ENCODE measurements at regions of chr12 and their contacts with region 1.

Region 1: DNA sequence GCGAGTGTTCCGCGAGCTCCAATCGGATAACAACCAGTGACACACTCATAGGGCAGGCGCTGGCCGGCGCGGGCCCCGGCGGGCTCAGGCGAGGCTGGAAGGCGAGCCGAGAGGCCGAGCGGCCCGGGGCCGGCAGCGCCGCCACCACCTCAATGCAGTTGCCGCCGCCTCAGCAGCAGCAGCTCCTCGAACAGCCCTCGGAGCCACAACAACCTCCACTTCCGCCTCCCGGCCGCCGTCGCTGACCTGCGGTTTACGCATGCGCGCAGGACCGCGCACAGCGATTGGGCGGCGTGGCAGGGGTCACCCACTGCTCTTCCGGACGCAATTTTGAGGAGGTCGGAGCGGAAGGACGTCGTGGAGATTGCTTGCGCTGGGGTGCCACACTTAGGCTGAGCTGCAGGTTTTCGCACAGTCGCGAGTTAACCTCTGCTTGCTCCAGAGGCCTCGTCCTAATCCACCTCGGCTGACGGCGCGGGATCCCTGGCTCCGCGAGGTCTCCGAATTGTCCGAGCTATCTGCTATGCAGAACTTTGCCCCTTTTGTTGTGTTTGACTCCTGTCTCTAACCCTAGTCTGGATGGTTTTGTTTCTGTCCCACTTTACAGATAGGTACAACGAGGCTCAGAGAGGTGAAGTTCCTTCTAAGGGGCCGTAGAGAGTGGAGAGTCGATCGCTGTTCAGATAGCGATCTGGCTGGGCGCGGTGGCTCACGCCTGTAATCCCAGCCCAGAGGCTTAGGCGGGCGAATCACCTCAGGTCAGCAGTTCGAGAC is at the starts of genes ACAD10 and BRAP:
- DNase-seq: peak; percentile 62
- ATAC-seq: peak; percentile 97
- H3K4me3 ChIP-seq: peak within 1 kb of the TSS; percentile 80 to 95
- H3K27ac ChIP-seq: peak within 1 kb of the TSS; percentile 97
- H3K4me1 ChIP-seq: peaks cover 18% of the 10 kb centered on the region; the same call in 1 of the 2 replicates
- H3K27me3 ChIP-seq: no peaks in the 10 kb centered on the region
- CTCF ChIP-seq: no peak
- total RNA-seq, gene ACAD10: 30.8 TPM
- total RNA-seq, gene BRAP: 19.6 TPM

Region 2: DNA sequence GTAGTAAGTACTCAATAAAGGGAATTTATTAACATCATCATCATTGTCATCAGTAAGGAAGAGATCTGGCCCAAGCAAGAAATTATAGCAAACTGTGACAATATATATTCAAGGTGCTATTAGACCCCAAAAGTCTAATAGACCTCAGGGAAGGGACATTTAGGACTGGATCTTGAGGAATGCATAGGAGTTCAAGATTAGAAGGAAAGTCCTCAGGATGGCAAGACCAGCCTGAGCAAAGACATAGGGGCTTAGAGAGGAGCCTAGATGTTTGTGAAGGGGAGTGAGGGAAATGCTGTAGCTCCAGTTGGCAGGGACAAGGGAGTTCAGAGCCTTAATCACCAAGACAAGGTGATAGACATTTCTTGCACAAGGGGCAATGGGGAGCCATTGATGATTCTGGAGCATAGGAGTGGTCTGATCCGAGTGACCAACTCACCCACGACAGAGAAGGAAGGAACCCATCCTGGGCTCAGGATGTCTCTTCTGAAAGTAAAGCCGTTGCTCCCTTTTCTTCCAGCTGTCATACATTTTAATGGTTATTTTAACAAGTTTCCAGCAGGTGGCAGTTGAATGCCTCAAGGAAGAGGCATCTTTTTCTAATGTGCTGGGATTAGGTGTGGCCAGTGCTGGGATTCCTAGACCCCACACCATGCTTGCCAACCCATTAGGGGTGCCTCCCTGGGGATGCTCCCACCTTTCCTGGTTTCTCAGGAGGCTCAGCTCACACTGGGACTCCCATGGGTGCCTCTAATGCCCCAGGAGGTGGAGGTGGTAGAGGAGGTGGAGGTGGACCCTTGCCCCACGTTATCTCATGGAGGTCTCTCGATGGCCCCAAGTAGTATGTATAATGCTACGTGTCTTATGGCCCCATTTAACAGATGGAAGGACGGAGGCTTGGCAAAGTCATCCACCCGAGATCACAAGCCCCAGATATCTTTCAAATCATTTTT is 354.9 kb before region 1 on chr12:
- CTCF ChIA-PET with region 1: no interaction called
- POLR2A ChIA-PET with region 1: interaction called, 14 read pairs
- in situ Hi-C with region 1: no loop called
- intact Hi-C with region 1: no loop called
- DNase-seq: peak; percentile 22
- ATAC-seq: peak; percentile 86
- H3K4me3 ChIP-seq: no peak overlapping the region
- H3K27ac ChIP-seq: no peak overlapping the region
- H3K4me1 ChIP-seq: no peaks in the 10 kb centered on the region
- H3K27me3 ChIP-seq: no peaks in the 10 kb centered on the region
- CTCF ChIP-seq: peak; percentile 84

Region 3: DNA sequence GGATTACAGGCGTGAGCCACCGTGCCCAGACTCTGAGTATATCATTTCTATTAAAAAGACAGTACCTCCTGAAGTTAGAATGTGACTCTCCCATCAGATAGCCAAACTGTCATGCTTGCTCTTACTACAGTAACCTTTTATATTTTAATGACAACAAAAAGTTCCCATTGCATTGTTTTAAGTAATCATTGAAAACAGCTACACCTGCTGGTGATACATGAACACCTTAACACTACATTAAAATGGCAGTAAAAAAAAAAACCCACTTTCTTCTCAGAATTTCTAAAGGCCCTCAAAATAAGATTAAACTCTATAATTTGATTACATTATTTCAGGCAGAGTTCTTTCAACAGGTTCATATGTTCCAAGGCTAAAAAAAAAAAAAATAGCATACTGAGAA is 203.5 kb before region 1 on chr12:
- CTCF ChIA-PET with region 1: no interaction called
- POLR2A ChIA-PET with region 1: interaction called, 11 read pairs
- in situ Hi-C with region 1: no loop called
- intact Hi-C with region 1: no loop called
- DNase-seq: no peak
- ATAC-seq: no peak
- H3K4me3 ChIP-seq: no peak overlapping the region
- H3K27ac ChIP-seq: no peak overlapping the region
- H3K4me1 ChIP-seq: no peaks in the 10 kb centered on the region
- H3K27me3 ChIP-seq: no peaks in the 10 kb centered on the region
- CTCF ChIP-seq: no peak

Region 4: DNA sequence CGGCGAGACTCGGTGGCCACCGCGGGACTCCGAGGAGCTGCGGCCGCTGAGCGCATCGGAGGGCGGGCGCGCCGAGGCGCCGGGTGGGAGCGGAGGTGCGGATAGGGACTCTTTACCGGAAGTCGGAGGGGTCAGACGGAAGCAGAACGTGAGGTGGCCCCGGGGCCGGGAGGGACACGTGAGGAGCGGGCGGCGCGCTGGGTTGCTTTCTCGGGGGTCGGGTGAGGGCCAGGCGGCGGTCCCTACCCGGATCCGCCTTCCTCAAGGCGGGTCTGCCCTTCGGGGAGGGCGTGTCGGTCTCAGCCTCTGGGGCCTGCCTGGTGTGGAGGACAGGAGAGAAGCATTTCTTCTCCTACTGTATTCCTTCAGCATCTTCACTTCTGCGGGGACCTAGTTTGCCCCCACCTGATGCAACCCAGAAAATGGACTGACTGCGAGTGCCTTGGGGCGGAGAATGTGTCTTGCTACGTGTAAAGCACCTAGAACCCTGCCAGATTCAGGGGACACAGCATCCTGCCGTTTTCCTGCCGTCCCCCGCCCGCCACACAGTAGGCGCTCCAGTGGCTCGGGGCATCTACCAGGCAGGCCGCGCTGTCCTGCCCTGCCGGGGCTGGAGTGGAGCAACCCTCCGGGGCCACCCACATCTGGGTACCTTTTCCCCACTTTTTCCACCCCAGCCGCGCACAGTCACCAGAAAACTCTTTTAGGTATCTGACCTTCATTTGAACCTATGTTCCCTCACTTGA is 86.3 kb before region 1 on chr12:
- CTCF ChIA-PET with region 1: no interaction called
- POLR2A ChIA-PET with region 1: no interaction called
- in situ Hi-C with region 1: loop called (anchors 25 kb)
- intact Hi-C with region 1: no loop called
- DNase-seq: peak; percentile 36
- ATAC-seq: peak; percentile 88
- H3K4me3 ChIP-seq: peak overlapping the region; percentile 78 to 91
- H3K27ac ChIP-seq: peak overlapping the region; percentile 98
- H3K4me1 ChIP-seq: peaks cover 13% of the 10 kb centered on the region
- H3K27me3 ChIP-seq: no peaks in the 10 kb centered on the region
- CTCF ChIP-seq: no peak